Natural killer cell (primary cell): ENCODE measurements at regions of chr10 and their contacts with region 1.

Region 1: DNA sequence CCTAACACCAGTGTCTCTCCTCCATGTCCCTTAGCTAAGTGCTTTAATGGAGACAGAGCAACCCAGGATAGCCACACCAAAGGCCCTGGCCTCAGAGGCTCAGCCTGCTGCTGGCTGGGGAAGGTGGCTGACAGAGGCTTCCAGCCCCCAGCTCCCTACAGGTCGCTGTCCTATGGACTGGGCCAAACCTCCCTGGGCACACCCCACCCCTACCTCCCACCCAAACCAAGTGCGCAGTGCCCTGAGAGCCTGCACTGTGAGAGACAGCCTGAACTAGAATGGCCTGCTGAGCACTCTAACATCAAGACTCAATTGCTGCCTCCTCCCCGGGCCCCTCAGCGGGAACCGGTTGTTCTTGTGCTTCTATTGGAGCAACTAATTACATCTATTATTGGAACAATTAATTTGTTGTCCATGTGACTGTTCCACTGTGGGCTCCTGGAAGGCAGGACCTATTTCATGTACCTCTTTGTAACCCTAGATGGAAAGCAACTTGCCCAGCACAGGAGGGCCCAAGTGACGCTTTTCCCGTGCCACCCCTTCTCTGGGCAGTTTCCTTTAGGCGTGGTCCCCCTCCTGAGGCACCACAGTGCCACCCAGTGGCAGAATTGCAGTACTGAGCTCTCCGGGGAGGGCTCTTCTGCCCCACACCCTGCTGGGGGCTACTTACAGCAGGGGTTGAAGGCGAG is 63.6 kb upstream of the WAPL start:
- DNase-seq: peak; percentile 53 to 86
- ATAC-seq: peak; percentile 85 to 99 (median 88)
- H3K4me3 ChIP-seq: no peak overlapping the region
- H3K4me3 Mint-ChIP-seq: no peak overlapping the region
- H3K27ac ChIP-seq: no peak overlapping the region
- H3K27ac Mint-ChIP-seq: no peak overlapping the region
- H3K4me1 ChIP-seq: peaks cover 4% of the 10 kb centered on the region
- H3K4me1 Mint-ChIP-seq: no peaks in the 10 kb centered on the region
- H3K27me3 ChIP-seq: no peaks in the 10 kb centered on the region
- H3K27me3 Mint-ChIP-seq: peaks cover 0 to 4% of the 10 kb centered on the region in 2 donors
- CTCF ChIP-seq: peak; percentile 92

Region 2: DNA sequence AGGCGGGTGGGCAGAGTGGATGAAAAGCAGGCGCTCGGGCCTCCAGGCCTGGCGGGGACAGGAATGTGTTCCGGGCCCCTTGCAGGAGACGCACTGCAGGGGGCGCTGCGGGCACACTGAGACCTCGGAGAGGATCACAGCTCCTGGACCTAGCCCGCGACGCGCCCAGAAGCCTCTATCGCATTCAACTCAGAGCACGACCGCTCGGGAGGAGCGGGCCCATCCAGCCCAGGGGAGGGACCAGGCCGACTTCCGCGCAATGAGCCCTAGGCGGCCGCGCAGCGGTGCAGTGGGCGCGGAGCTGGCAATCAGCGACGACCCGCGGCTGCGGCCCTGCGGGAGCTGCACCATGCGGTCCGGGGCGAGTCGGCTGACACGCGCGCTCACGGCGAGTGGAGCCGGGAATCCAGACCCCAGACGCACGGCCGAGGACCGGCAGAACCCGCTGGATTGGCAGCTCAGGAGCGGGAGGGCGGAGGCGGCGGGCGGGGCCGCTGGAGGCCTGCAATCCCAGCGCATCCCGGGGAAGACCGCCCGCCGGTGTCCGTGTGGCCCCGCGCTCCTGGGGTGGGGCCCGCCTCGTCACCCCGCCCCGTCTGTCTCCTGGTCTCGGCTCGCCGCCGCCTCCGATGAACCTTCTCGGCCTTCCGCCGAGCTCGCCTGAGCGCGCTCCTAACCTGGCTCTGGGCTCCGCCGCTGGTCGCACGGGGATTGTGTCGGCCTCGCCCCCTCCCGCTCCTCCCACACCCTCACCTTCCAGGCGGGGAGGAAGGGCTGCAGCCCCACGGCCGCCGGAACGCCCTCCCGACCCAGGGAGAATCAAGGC is 185.1 kb before region 1 on chr10:
- intact Hi-C with region 1: loop called (anchors 1 kb)
- DNase-seq: peak; percentile 79 to 96
- ATAC-seq: peak; percentile 79 to 93 (median 90)
- H3K4me3 ChIP-seq: peak overlapping the region; percentile 60
- H3K4me3 Mint-ChIP-seq: peak overlapping the region; percentile 86
- H3K27ac ChIP-seq: peak overlapping the region; percentile 38
- H3K27ac Mint-ChIP-seq: peak overlapping the region in 1 of 2 donors; percentile 27
- H3K4me1 ChIP-seq: peaks cover 21% of the 10 kb centered on the region
- H3K4me1 Mint-ChIP-seq: peaks cover 9 to 18% of the 10 kb centered on the region in 2 donors
- H3K27me3 ChIP-seq: peaks cover 4% of the 10 kb centered on the region
- H3K27me3 Mint-ChIP-seq: peaks cover 26 to 31% of the 10 kb centered on the region in 2 donors
- CTCF ChIP-seq: peak; percentile 92

Region 3: DNA sequence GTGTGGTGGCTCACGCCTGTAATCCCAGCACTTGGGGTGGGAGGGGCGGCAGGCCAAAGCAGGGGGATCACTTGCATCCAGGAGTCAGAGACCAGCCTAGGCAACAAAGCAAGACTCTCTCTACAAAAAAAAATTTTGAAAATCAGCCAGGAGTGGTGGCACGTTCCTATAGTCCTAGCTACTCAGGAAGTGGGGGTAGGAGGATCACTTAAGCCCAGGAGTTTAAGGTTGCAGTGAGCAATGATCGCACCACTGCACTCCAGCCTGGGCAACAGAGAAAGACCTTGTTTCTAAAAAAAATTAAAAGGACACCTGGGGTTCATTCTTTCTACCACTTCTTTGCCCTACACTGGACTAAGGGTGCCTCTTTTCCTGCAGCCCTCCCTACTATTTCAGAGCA is 78.7 kb before region 1 on chr10:
- intact Hi-C with region 1: no loop called
- DNase-seq: no peak
- ATAC-seq: no peak
- H3K4me3 ChIP-seq: no peak overlapping the region
- H3K4me3 Mint-ChIP-seq: no peak overlapping the region
- H3K27ac ChIP-seq: no peak overlapping the region
- H3K27ac Mint-ChIP-seq: peak overlapping the region in 1 of 2 donors; percentile 4
- H3K4me1 ChIP-seq: peaks cover 4% of the 10 kb centered on the region
- H3K4me1 Mint-ChIP-seq: peaks cover 15 to 22% of the 10 kb centered on the region in 2 donors
- H3K27me3 ChIP-seq: no peaks in the 10 kb centered on the region
- H3K27me3 Mint-ChIP-seq: no peaks in the 10 kb centered on the region
- CTCF ChIP-seq: no peak

Region 4: GRCh38 chr10:86556568-86557276 is 28.5 kb before region 1 on chr10:
- intact Hi-C with region 1: no loop called
- DNase-seq: no peak
- ATAC-seq: no peak
- H3K4me3 ChIP-seq: no peak overlapping the region
- H3K4me3 Mint-ChIP-seq: no peak overlapping the region
- H3K27ac ChIP-seq: no peak overlapping the region
- H3K27ac Mint-ChIP-seq: no peak overlapping the region
- H3K4me1 ChIP-seq: no peaks in the 10 kb centered on the region
- H3K4me1 Mint-ChIP-seq: peaks cover 0 to 4% of the 10 kb centered on the region in 2 donors
- H3K27me3 ChIP-seq: no peaks in the 10 kb centered on the region
- H3K27me3 Mint-ChIP-seq: peaks cover 0 to 2% of the 10 kb centered on the region in 2 donors
- CTCF ChIP-seq: no peak